ENCODE measurements at regions of chr13 and their contacts with region 1.

Region 1: DNA sequence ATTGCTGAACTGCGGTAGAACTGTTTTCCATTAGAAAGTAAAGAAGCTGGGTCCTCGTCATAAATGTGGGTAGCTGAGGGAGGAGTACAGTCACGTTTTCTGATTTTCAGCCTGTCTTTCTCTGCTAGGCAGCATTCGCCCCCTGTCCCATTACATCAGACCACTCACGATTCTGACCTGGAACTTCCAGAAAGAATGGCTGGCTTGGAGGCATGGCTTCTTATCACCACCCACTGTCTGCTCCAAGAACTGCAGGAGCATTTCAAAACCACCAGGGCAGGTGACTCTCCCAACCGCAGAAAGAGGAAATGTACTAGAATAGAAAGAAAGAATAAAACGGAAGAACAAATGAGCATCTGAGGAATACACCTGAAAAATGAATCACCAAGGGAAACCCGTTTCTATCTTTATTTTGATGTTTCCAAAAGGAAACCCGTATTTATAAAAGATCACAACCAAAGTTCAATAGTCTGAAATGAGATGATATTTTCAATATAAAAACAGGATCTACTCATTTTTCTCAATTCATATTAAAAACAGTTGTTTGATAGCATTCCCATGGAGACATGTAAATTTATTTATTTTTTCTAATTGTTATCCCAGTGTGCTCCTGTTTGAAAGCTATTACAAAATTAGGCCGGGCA is 22.1 kb upstream of the POMP start:
- DNase-seq: peak in 6 of 10 donors; percentile 26 to 84 (median 36)

Region 2: GRCh38 chr13:28324181-28324789 is 312.5 kb before region 1 on chr13:
- intact Hi-C with region 1: loop called (anchors 2 kb)
- DNase-seq: peak in 5 of 10 donors; percentile 21 to 86 (median 46)

Region 3: DNA sequence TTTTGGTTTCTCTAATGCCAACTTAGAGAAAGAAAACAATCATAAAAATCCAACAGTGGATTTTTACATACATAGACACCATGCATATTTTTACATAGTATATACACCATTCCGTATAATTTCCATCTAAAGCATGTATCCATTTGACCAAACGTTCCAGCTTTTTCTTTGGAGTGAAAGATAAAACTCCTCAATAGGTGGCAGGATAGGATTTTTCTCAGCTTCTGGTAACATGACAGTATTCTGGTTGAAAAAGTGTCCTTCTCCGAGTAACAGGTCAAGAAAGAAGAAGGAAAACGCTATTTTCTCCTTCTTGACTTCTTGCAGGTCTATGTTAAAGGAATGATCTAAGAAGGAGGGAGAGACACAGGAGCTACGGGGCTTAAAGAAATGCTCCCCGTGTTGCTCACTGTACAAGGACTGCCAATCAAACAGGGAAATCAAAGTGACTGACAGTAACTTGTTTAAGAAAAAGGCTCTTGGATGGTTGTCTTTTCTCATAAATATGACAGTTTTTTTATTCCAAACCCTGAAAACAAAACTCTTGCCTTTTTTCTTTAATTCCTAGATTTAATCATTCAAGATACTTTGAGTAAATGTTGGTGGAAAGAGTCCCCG is 153.4 kb before region 1 on chr13:
- intact Hi-C with region 1: loop called (anchors 5 kb)
- DNase-seq: no peak

Region 4: GRCh38 chr13:28531077-28531844 is 105.5 kb before region 1 on chr13:
- intact Hi-C with region 1: loop called (anchors 1 kb)
- DNase-seq: peak in 2 of 10 donors; percentile 18 to 78

Region 5: GRCh38 chr13:28548872-28549271 is 87.9 kb before region 1 on chr13:
- intact Hi-C with region 1: no loop called
- DNase-seq: no peak

Measured in posterior cingulate gyrus (tissue), 11 donors.